B cell (primary cell): ENCODE measurements at regions of chr1 and their contacts with region 1.

Region 1: DNA sequence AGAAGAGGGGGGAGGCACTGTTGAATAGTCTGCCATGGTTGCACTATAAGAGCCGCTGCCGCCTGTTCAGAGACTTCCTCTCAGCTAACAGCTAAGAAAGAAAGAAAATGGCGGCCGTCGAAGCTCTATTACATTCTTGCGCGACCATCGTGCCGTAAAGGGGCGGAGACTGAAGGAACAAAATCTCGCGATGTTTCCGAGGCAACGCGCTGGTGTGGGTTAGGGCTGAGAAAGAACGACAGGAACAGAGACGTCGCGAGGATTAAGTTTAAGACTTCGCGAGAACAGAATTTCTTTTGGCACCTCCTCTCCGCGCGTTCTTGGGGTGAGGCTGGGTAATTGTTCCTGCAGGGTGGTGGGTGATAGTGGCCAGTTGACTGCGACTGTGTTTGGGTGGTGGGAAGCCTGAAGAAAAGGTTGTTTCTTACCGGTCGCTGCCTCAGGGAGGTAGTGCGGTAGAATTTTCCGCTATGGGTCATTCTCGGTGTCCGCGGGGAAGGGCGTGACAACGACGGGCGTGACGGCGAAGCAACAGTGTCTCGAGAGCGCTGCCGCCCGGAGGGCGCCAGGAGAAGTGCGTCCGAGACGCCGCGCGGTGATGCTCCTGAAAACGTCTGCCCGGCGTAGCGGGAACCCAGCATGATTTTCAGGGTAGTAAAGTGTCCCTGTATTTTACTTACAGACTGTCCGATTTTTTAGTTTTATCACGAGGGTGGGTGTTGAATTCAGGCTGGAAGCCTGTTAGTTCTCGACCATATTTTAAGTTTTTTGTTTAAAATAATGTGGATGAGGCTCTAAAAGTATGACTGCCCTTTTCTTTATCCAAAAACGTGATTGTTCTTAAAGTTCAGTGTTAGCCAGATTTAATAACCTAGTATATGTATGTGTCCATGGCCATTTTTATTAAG is at the start of gene FUBP1:
- DNase-seq: peak; percentile 99
- ATAC-seq: peak; percentile 77
- H3K4me3 ChIP-seq: peak within 1 kb of the TSS; percentile 77 to 100 (median 96)
- H3K4me3 Mint-ChIP-seq: no peak within 1 kb of the TSS
- H3K27ac ChIP-seq: peak within 1 kb of the TSS; percentile 94 to 99
- H3K27ac Mint-ChIP-seq: no peak within 1 kb of the TSS
- H3K4me1 ChIP-seq: peaks cover 40 to 47% of the 10 kb centered on the region in 2 donors
- H3K4me1 Mint-ChIP-seq: peaks cover 38% of the 10 kb centered on the region
- H3K27me3 ChIP-seq: no peaks in the 10 kb centered on the region
- H3K27me3 Mint-ChIP-seq: no peaks in the 10 kb centered on the region
- CTCF ChIP-seq: peak; percentile 77
- total RNA-seq, gene FUBP1: 249 and 254 TPM in 2 replicates

Region 2: GRCh38 chr1:77219166-77219887 is 759.9 kb before region 1 on chr1 and contains the start of gene PIGK:
- CTCF ChIA-PET with region 1: no interaction called
- POLR2A ChIA-PET with region 1: no interaction called
- intact Hi-C with region 1: loop called (anchors 2 kb)
- DNase-seq: peak; percentile 89
- ATAC-seq: peak; percentile 96
- H3K4me3 ChIP-seq: peak within 1 kb of the TSS; percentile 85 to 94 (median 93)
- H3K4me3 Mint-ChIP-seq: peak within 1 kb of the TSS; percentile 96
- H3K27ac ChIP-seq: peak within 1 kb of the TSS; percentile 71 to 83
- H3K27ac Mint-ChIP-seq: peak within 1 kb of the TSS; percentile 91
- H3K4me1 ChIP-seq: peaks cover 9 to 11% of the 10 kb centered on the region in 2 donors
- H3K4me1 Mint-ChIP-seq: peaks cover 26% of the 10 kb centered on the region
- H3K27me3 ChIP-seq: no peaks in the 10 kb centered on the region
- H3K27me3 Mint-ChIP-seq: no peaks in the 10 kb centered on the region
- CTCF ChIP-seq: no peak
- total RNA-seq, gene PIGK: 14.9 and 16.4 TPM in 2 replicates

Region 3: DNA sequence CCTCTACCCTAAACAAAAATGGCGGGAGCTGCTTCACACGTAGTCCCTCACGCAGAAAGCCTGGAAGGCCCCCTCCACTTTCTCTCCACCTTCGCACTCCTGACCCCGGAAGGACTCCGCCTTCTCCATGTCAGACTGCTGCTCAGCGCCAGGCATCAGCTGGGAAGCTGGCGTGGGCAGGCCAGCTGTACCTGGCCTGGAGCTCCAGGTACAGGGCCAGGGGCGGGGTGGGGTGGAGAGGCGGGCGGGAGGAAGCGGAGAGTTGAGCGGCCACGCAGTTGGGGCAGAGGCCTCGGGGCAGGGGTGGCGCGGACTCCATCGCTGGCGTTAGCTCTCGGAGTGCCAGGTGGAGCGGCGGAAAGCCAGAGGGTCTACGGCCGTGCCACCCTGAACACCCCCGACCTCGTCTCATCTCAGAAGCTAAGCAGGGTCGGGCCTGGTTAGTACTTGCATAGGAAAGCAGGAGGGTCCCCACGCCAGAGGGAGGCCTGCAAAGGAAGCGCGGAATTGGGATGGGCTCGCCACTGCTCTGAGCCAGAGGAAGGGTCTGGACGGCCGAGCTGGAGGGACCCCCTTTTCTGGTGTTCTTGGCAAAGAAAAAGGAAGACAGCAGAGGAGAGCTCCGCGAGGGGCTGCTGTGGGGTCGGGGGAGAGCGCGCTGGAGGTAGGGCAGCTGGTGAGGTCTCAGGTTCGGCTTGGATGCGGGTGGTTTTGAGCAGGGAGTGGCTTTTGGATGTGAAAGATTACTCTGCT is 199.5 kb before region 1 on chr1 and contains the start of gene MIGA1:
- CTCF ChIA-PET with region 1: no interaction called
- POLR2A ChIA-PET with region 1: interaction called, 6 read pairs
- intact Hi-C with region 1: loop called (anchors 1 kb)
- DNase-seq: peak; percentile 92
- ATAC-seq: peak; percentile 97
- H3K4me3 ChIP-seq: peak within 1 kb of the TSS; percentile 57 to 95 (median 83)
- H3K4me3 Mint-ChIP-seq: peak within 1 kb of the TSS; percentile 94
- H3K27ac ChIP-seq: peak within 1 kb of the TSS; percentile 45 to 85
- H3K27ac Mint-ChIP-seq: peak within 1 kb of the TSS; percentile 89
- H3K4me1 ChIP-seq: peaks cover 9 to 11% of the 10 kb centered on the region in 2 donors
- H3K4me1 Mint-ChIP-seq: peaks cover 28% of the 10 kb centered on the region
- H3K27me3 ChIP-seq: peaks cover 0 to 1% (median 0%) of the 10 kb centered on the region in 4 experiments
- H3K27me3 Mint-ChIP-seq: peaks cover 2% of the 10 kb centered on the region
- CTCF ChIP-seq: no peak
- total RNA-seq, gene MIGA1: 18.0 and 20.9 TPM in 2 replicates

Region 4: DNA sequence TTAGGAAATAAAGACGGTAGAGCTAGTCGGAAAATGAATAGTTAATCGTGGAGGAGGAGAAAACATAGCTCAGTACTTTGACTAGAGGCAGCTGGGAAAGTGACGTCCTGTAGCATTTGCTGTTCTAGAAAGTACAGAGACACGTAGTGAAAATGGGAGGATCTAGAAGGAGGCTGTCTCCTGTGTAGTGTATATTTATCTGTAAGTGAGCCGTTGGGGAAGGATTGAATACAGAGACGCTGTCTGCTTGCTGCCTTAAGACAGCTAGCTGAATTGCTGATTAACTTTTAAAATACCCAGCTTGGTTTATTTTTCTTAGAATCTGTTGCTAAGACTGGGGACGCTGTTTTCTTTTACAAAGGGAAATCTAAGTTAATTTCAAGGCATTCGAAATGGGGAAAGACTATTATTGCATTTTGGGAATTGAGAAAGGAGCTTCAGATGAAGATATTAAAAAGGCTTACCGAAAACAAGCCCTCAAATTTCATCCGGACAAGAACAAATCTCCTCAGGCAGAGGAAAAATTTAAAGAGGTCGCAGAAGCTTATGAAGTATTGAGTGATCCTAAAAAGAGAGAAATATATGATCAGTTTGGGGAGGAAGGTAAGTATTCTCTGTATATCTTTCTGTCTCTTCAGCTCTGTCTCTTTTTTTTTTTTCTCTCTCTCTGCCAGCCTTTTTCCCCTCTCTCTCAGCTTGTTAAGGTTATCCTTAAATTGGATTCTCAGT is 25.7 kb after region 1 on chr1 and contains the start of gene DNAJB4:
- CTCF ChIA-PET with region 1: interaction called, 18 read pairs
- POLR2A ChIA-PET with region 1: interaction called, 19 read pairs
- intact Hi-C with region 1: loop called (anchors 1 kb)
- DNase-seq: peak; percentile 91
- ATAC-seq: peak; percentile 99
- H3K4me3 ChIP-seq: peak within 1 kb of the TSS; percentile 55 to 95 (median 66)
- H3K4me3 Mint-ChIP-seq: peak within 1 kb of the TSS; percentile 85
- H3K27ac ChIP-seq: peak within 1 kb of the TSS; percentile 97 to 98
- H3K27ac Mint-ChIP-seq: peak within 1 kb of the TSS; percentile 97
- H3K4me1 ChIP-seq: peaks cover 0 to 20% of the 10 kb centered on the region in 2 donors
- H3K4me1 Mint-ChIP-seq: peaks cover 44% of the 10 kb centered on the region
- H3K27me3 ChIP-seq: no peaks in the 10 kb centered on the region
- H3K27me3 Mint-ChIP-seq: no peaks in the 10 kb centered on the region
- CTCF ChIP-seq: no peak
- total RNA-seq, gene DNAJB4: 16.2 and 17.0 TPM in 2 replicates